PC-3 (cell line): ENCODE measurements at regions of chr2 and their contacts with region 1.

Region 1: GRCh38 chr2:109128048-109128465 is 948 bp upstream of the SH3RF3 start:
- DNase-seq: peak; percentile 88
- ATAC-seq: peak; percentile 52
- H3K4me3 ChIP-seq: peak overlapping the region; percentile 91
- H3K27ac ChIP-seq: peak overlapping the region; percentile 12; the same call in 1 of the 2 replicates
- H3K4me1 ChIP-seq: peaks cover 47% of the 10 kb centered on the region
- H3K27me3 ChIP-seq: no peaks in the 10 kb centered on the region
- CTCF ChIP-seq: peak; percentile 92

Region 2: GRCh38 chr2:108905176-108905575 is 222.9 kb before region 1 on chr2:
- CTCF ChIA-PET with region 1: no interaction called
- POLR2A ChIA-PET with region 1: no interaction called
- intact Hi-C with region 1: no loop called
- DNase-seq: peak; percentile 22
- ATAC-seq: no peak
- H3K4me3 ChIP-seq: no peak overlapping the region
- H3K27ac ChIP-seq: no peak overlapping the region
- H3K4me1 ChIP-seq: peaks cover 6% of the 10 kb centered on the region; the same call in 1 of the 2 replicates
- H3K27me3 ChIP-seq: no peaks in the 10 kb centered on the region
- CTCF ChIP-seq: no peak

Region 3: DNA sequence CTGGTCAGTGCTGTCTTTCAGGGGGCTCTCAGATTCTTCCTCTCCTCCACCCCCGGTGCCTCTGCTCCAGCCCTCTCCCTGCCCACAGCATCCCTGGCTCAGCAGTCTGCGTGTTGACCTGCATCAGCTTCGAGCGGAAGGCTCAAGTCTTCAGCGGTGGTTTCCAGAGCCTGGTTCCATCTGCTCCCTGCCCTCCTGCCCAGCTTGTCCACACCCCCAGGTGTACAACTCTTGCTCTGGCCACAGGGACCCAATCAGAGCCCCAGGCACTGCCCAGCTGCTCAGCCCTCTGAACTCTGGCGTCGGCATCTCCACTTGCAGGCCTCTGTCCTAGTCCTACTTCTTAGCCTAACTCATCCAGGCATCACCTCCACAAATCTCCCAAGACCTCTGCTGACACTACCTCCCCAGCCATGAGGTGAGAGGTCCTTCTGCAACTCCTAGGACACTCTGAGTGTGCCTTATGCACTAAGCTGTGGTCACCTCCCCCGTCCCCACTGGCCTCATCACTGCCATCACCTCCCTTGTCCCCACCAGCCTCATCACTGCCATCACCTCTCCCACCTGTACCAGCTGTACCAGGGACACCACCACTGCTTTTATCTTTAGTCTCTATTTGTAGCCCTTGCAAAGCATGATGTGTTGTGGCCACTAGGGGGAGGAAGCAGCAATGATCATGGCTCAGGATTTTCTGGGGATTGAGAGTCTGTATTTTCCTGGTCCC is 200.0 kb before region 1 on chr2:
- CTCF ChIA-PET with region 1: no interaction called
- POLR2A ChIA-PET with region 1: no interaction called
- intact Hi-C with region 1: loop called (anchors 10 kb)
- DNase-seq: peak; percentile 72
- ATAC-seq: peak; percentile 87
- H3K4me3 ChIP-seq: no peak overlapping the region
- H3K27ac ChIP-seq: no peak overlapping the region
- H3K4me1 ChIP-seq: peaks cover 9% of the 10 kb centered on the region
- H3K27me3 ChIP-seq: no peaks in the 10 kb centered on the region
- CTCF ChIP-seq: peak; percentile 94

Region 4: GRCh38 chr2:109084341-109084740 is 43.7 kb before region 1 on chr2:
- CTCF ChIA-PET with region 1: no interaction called
- POLR2A ChIA-PET with region 1: no interaction called
- intact Hi-C with region 1: no loop called
- DNase-seq: no peak
- ATAC-seq: no peak
- H3K4me3 ChIP-seq: no peak overlapping the region
- H3K27ac ChIP-seq: no peak overlapping the region
- H3K4me1 ChIP-seq: no peaks in the 10 kb centered on the region
- H3K27me3 ChIP-seq: no peaks in the 10 kb centered on the region
- CTCF ChIP-seq: no peak

Region 5: DNA sequence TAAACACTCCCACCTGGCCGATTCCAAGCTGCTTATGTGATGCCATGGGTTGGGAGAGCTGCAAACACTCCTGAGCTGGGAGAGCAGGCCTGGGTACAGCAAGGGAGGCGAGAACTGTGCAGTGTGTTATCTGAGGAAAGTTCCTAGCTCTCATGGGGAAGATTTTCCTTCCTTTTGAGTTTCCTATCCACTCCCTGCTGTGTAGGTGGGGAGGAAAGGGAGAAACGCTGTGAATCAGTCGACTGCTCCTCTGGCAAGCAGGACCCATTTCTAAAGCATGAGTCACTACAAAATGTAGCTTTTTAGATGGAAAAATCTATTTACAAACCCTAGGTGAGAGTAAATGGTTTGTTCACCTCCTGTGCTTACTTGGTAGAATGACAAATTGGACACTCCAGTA is 81.4 kb after region 1 on chr2:
- CTCF ChIA-PET with region 1: no interaction called
- POLR2A ChIA-PET with region 1: no interaction called
- intact Hi-C with region 1: loop called (anchors 1 kb)
- DNase-seq: peak; percentile 92
- ATAC-seq: peak; percentile 69
- H3K4me3 ChIP-seq: peak overlapping the region; percentile 49
- H3K27ac ChIP-seq: peak overlapping the region; percentile 93
- H3K4me1 ChIP-seq: peaks cover 57% of the 10 kb centered on the region
- H3K27me3 ChIP-seq: no peaks in the 10 kb centered on the region
- CTCF ChIP-seq: no peak

Region 6: GRCh38 chr2:109331896-109332848 is 204.1 kb after region 1 on chr2:
- CTCF ChIA-PET with region 1: interaction called, 3 read pairs
- POLR2A ChIA-PET with region 1: no interaction called
- intact Hi-C with region 1: loop called (anchors 5 kb)
- DNase-seq: peak; percentile 95
- ATAC-seq: peak; percentile 80
- H3K4me3 ChIP-seq: peak overlapping the region; percentile 66
- H3K27ac ChIP-seq: peak overlapping the region; percentile 93
- H3K4me1 ChIP-seq: peaks cover 87% of the 10 kb centered on the region
- H3K27me3 ChIP-seq: no peaks in the 10 kb centered on the region
- CTCF ChIP-seq: no peak

Region 7: DNA sequence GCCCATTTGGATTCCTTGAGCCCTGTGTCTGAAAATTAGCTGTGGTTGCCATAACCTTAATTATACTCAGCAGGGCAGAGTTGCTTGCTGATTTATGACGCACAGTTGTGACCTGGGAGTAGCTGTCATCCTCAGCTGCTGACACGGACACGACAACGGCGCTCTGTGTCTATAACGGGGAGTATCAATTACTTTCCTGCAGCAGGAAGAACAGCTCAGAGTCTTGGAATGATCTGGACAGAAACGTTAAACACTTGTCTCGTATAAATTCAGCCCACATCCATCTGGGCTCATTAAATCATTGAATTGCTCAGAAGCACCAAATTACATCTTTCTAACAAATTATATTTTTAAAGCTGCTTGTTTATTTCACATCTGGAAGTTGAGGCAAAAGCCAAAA is 369.4 kb after region 1 on chr2:
- CTCF ChIA-PET with region 1: no interaction called
- POLR2A ChIA-PET with region 1: no interaction called
- intact Hi-C with region 1: loop called (anchors 2 kb)
- DNase-seq: peak; percentile 78
- ATAC-seq: peak; percentile 90
- H3K4me3 ChIP-seq: no peak overlapping the region
- H3K27ac ChIP-seq: peak overlapping the region; percentile 61
- H3K4me1 ChIP-seq: peaks cover 34% of the 10 kb centered on the region
- H3K27me3 ChIP-seq: no peaks in the 10 kb centered on the region
- CTCF ChIP-seq: no peak